Heart left ventricle (tissue), 16 donors: ENCODE measurements at regions of chr3 and their contacts with region 1.

Region 1: DNA sequence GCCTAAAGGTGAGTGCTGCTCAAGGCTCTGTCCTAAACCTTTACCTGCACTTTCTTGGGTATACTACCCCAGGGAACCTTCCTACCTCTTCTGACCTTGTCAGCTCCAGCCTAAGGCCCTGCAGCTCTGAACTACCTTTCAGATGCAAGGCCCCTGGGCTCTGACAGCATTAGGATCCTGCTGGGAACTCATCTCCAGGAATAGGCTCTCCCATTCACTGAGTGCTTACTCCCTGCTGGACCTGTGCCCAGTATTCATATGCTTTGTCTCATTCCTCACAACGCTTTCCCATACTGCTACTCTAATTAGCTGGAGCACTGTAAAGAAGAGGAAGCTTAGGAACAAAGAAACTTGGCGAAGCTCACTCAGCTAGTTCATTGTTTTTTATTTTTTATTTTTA is 53.8 kb upstream of the RAB6B start:
- DNase-seq: peak in 2 of 5 donors; percentile 46 to 70
- ATAC-seq: peak in 3 of 4 donors; percentile 47 to 68 (median 61)
- H3K4me3 ChIP-seq: no peak overlapping the region
- H3K27ac ChIP-seq: peak overlapping the region; percentile 16 to 83 (median 66)
- H3K4me1 ChIP-seq: peaks cover 0 to 52% (median 25%) of the 10 kb centered on the region in 12 donors
- H3K27me3 ChIP-seq: no peaks in the 10 kb centered on the region
- CTCF ChIP-seq: no peak
- POLR2A ChIP-seq: no peak

Region 2: GRCh38 chr3:133843634-133844033 is 105.8 kb before region 1 on chr3:
- intact Hi-C with region 1: no loop called
- DNase-seq: peak; percentile 44 to 68 (median 49)
- ATAC-seq: peak; percentile 38 to 80 (median 64)
- H3K4me3 ChIP-seq: no peak overlapping the region
- H3K27ac ChIP-seq: peak overlapping the region in 4 of 12 donors; percentile 29 to 52 (median 41)
- H3K4me1 ChIP-seq: peaks cover 0 to 13% (median 0%) of the 10 kb centered on the region in 12 donors
- H3K27me3 ChIP-seq: no peaks in the 10 kb centered on the region
- CTCF ChIP-seq: no peak
- POLR2A ChIP-seq: no peak

Region 3: DNA sequence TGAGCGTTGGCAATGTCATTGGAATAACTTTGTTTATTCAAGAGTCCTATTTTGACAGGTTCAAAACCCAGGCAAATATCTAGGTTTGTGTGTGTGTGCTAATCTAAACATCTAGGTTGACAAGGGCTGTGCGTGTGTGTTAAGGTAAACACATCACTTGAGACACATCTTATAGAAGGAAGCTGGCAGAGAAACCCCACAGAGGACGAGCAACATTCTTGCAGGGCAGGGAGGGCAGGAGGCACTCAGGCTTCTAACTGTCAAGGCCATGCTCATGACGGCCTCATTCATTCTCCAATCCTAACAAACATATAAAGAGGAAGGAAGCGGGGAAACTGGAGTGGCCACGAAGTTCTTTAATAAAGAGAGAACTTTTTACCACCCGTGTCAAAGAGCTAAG is 36.8 kb after region 1 on chr3:
- intact Hi-C with region 1: loop called in 2 of 10 experiments (anchors 2 kb)
- DNase-seq: no peak
- ATAC-seq: no peak
- H3K4me3 ChIP-seq: no peak overlapping the region
- H3K27ac ChIP-seq: peak overlapping the region in 6 of 12 donors; percentile 13 to 65 (median 42)
- H3K4me1 ChIP-seq: peaks cover 0 to 43% (median 9%) of the 10 kb centered on the region in 12 donors
- H3K27me3 ChIP-seq: no peaks in the 10 kb centered on the region
- CTCF ChIP-seq: no peak
- POLR2A ChIP-seq: no peak